Tibial artery (tissue), 4 donors: ENCODE measurements at regions of chrX and their contacts with region 1.

Region 1: GRCh38 chrX:69285881-69286564 is 120.8 kb upstream of the PJA1 start:
- DNase-seq: peak; percentile 29 to 71
- H3K4me3 ChIP-seq: peak overlapping the region; percentile 50 to 55
- H3K27ac ChIP-seq: no peak overlapping the region
- H3K4me1 ChIP-seq: peaks cover 0 to 11% (median 4%) of the 10 kb centered on the region in 4 donors
- H3K27me3 ChIP-seq: no peaks in the 10 kb centered on the region
- CTCF ChIP-seq: peak; percentile 78 to 80

Region 2: DNA sequence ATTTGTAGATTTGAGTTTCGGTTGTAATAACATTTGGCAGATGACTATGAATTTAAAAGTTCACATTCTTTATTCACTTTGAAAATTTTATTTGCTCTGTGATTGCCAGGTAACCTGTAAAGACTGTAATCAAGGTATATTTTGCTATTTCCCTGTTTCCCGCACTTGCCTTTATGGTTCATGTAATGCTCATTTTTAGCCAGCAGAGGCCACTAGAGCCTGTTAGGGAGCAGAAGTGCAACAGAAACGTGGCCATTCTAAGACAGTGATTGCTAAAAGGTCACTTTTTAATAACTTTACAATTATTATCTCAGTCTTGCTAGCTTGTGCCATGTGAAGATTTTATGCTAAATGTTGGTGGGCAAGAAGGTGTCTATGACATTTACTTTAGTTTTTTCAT is 774.8 kb before region 1 on chrX:
- intact Hi-C with region 1: loop called (anchors 10 kb)
- DNase-seq: no peak
- H3K4me3 ChIP-seq: no peak overlapping the region
- H3K27ac ChIP-seq: no peak overlapping the region
- H3K4me1 ChIP-seq: no peaks in the 10 kb centered on the region
- H3K27me3 ChIP-seq: no peaks in the 10 kb centered on the region
- CTCF ChIP-seq: peak; percentile 57 to 62